Naive thymus-derived CD4-positive, alpha-beta T cell (primary cell): ENCODE measurements at regions of chrX and their contacts with region 1.

Region 1: GRCh38 chrX:109890895-109891502 is 111.9 kb upstream of the TMEM164 start:
- DNase-seq: peak in 8 of 9 donors; percentile 11 to 48 (median 40)
- ATAC-seq: peak; percentile 74
- H3K4me3 ChIP-seq: no peak overlapping the region
- H3K4me3 Mint-ChIP-seq: no peak overlapping the region
- H3K27ac ChIP-seq: no peak overlapping the region
- H3K27ac Mint-ChIP-seq: no peak overlapping the region
- H3K4me1 ChIP-seq: no peaks in the 10 kb centered on the region
- H3K4me1 Mint-ChIP-seq: peaks cover 0 to 1% (median 0%) of the 10 kb centered on the region in 7 donors
- H3K27me3 ChIP-seq: no peaks in the 10 kb centered on the region
- H3K27me3 Mint-ChIP-seq: peaks cover 0 to 6% (median 0%) of the 10 kb centered on the region in 5 donors

Region 2: GRCh38 chrX:109635176-109635575 is 255.8 kb before region 1 on chrX:
- CTCF ChIA-PET with region 1: no interaction called
- POLR2A ChIA-PET with region 1: no interaction called
- intact Hi-C with region 1: loop called in 1 of 2 experiments (anchors 5 kb)
- DNase-seq: no peak
- ATAC-seq: no peak
- H3K4me3 ChIP-seq: no peak overlapping the region
- H3K4me3 Mint-ChIP-seq: no peak overlapping the region
- H3K27ac ChIP-seq: no peak overlapping the region
- H3K27ac Mint-ChIP-seq: no peak overlapping the region
- H3K4me1 ChIP-seq: no peaks in the 10 kb centered on the region
- H3K4me1 Mint-ChIP-seq: peaks cover 0 to 26% (median 5%) of the 10 kb centered on the region in 7 donors
- H3K27me3 ChIP-seq: no peaks in the 10 kb centered on the region
- H3K27me3 Mint-ChIP-seq: no peaks in the 10 kb centered on the region

Region 3: DNA sequence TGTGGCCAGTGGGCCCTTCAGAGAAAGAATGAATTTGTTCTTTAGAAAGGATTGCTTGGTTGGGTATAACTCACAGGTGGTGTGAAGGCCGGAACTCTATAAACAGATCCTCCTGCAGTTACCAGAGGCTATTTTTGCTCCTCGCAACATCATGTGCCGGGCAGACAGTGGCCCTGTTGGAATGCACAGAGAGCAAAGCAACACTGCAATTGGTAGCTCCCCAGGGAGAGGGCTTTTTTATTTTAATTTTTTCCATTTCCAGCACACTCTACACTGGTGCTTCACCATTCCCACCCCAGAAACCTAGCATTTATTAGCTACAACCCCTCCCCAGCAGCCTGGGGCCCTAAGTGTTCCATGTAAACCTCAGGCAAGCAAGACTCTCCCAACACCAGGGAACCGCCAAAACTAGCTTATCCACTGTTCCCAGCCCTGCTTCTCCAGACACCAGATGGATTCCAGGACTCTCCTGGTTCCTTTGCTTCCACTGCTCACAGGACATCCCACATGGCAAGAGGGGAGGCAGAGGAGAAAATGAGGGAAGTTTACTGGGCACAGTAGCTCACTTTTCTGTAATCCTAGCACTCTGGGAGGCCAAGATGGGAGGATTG is 36.8 kb after region 1 on chrX:
- CTCF ChIA-PET with region 1: no interaction called
- POLR2A ChIA-PET with region 1: no interaction called
- intact Hi-C with region 1: no loop called
- DNase-seq: no peak
- ATAC-seq: no peak
- H3K4me3 ChIP-seq: no peak overlapping the region
- H3K4me3 Mint-ChIP-seq: no peak overlapping the region
- H3K27ac ChIP-seq: no peak overlapping the region
- H3K27ac Mint-ChIP-seq: no peak overlapping the region
- H3K4me1 ChIP-seq: no peaks in the 10 kb centered on the region
- H3K4me1 Mint-ChIP-seq: peaks cover 0 to 5% (median 0%) of the 10 kb centered on the region in 7 donors
- H3K27me3 ChIP-seq: no peaks in the 10 kb centered on the region
- H3K27me3 Mint-ChIP-seq: no peaks in the 10 kb centered on the region

Region 4: GRCh38 chrX:109974906-109975655 is 84.1 kb after region 1 on chrX:
- CTCF ChIA-PET with region 1: no interaction called
- POLR2A ChIA-PET with region 1: no interaction called
- intact Hi-C with region 1: no loop called
- DNase-seq: no peak
- ATAC-seq: no peak
- H3K4me3 ChIP-seq: no peak overlapping the region
- H3K4me3 Mint-ChIP-seq: peak overlapping the region in 1 of 10 donors; percentile 64
- H3K27ac ChIP-seq: no peak overlapping the region
- H3K27ac Mint-ChIP-seq: peak overlapping the region in 1 of 9 donors; percentile 68
- H3K4me1 ChIP-seq: no peaks in the 10 kb centered on the region
- H3K4me1 Mint-ChIP-seq: peaks cover 0 to 21% (median 0%) of the 10 kb centered on the region in 7 donors
- H3K27me3 ChIP-seq: no peaks in the 10 kb centered on the region
- H3K27me3 Mint-ChIP-seq: peaks cover 6 to 9% (median 7%) of the 10 kb centered on the region in 5 donors